Transverse colon (tissue), 4 donors: ENCODE measurements at regions of chr10 and their contacts with region 1.

Region 1: GRCh38 chr10:101214446-101215396 is 14.5 kb downstream of the LBX1 start:
- DNase-seq: peak; percentile 61
- H3K4me3 ChIP-seq: peak overlapping the region in 1 of 4 donors; percentile 4
- H3K27ac ChIP-seq: no peak overlapping the region
- H3K4me1 ChIP-seq: peaks cover 8 to 48% (median 33%) of the 10 kb centered on the region in 4 donors
- H3K27me3 ChIP-seq: peaks cover 97% of the 10 kb centered on the region
- CTCF ChIP-seq: peak; percentile 70 to 92 (median 85)
- EP300 ChIP-seq: no peak
- POLR2A ChIP-seq: no peak

Region 2: DNA sequence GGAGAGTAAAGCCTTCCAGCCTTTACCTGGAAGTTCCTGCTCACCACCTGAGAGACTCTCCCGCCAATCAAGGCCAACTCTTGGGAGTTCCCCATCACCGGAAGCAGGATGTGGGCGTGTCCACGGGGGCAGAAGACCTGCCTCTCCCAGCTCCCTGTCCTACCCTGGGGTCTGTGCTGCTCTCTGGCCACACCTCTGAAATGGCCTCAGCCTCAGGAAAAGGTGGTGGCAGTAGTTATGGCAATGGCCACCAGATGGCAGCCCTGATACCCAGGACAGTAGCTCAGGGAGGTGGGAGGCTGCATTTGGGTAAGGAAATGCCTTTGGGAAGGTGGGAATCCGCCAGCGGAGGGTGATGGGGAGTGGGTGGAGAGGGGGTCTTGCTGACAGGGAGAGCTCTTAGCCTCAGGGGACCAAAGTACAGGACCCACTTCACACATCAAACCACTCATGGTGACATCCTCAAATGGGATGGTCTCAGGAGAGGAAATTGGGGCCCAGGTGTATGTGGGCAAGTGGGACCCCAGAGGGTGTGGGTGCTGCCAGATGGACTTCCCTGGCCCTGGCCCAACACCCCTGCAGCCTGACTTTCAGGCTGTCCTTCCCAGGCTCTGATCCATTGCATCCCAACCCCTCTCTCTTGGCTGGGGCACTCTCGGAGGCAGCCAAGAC is 119.0 kb before region 1 on chr10:
- in situ Hi-C with region 1: no loop called
- intact Hi-C with region 1: no loop called
- DNase-seq: peak; percentile 82
- H3K4me3 ChIP-seq: no peak overlapping the region
- H3K27ac ChIP-seq: no peak overlapping the region
- H3K4me1 ChIP-seq: no peaks in the 10 kb centered on the region
- H3K27me3 ChIP-seq: peaks cover 85% of the 10 kb centered on the region
- CTCF ChIP-seq: peak; percentile 67 to 93 (median 85)
- EP300 ChIP-seq: no peak
- POLR2A ChIP-seq: no peak

Region 3: GRCh38 chr10:101297901-101298486 is 83.3 kb after region 1 on chr10:
- in situ Hi-C with region 1: no loop called
- intact Hi-C with region 1: loop called (anchors 10 kb)
- DNase-seq: peak; percentile 66
- H3K4me3 ChIP-seq: no peak overlapping the region
- H3K27ac ChIP-seq: no peak overlapping the region
- H3K4me1 ChIP-seq: peaks cover 0 to under 1% (median 0%) of the 10 kb centered on the region in 4 donors
- H3K27me3 ChIP-seq: peaks cover 75% of the 10 kb centered on the region
- CTCF ChIP-seq: peak; percentile 67 to 87 (median 80)
- EP300 ChIP-seq: no peak
- POLR2A ChIP-seq: no peak

Region 4: DNA sequence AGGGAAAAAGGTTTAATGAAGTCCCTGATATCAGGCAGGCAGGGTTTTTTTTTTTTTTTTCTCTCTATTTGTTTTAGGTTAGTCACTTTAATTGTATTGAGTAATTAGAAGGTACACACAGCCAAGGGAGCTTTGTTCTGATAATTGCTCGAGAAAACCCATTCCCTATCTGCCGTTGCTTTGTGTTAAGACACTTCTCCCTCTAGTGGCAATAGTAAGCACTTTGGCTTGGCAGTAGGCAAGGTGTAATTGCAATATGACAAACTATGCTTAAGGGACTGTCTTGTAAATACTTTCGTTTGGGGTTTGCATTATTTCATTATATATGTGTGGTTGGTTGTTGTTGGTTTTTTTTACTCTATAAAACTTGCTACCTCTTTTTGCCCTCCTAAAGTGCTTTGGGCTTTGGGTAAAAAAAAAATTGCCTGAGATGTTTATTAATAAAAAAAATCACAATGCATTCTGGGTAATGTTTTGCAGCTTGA is 252.6 kb after region 1 on chr10:
- in situ Hi-C with region 1: loop called in 1 of 4 experiments (anchors 25 kb)
- intact Hi-C with region 1: no loop called
- DNase-seq: no peak
- H3K4me3 ChIP-seq: no peak overlapping the region
- H3K27ac ChIP-seq: no peak overlapping the region
- H3K4me1 ChIP-seq: peaks cover 0 to 15% (median 9%) of the 10 kb centered on the region in 4 donors
- H3K27me3 ChIP-seq: no peaks in the 10 kb centered on the region
- CTCF ChIP-seq: peak; percentile 67 to 76 (median 73)
- EP300 ChIP-seq: no peak
- POLR2A ChIP-seq: no peak

Region 5: DNA sequence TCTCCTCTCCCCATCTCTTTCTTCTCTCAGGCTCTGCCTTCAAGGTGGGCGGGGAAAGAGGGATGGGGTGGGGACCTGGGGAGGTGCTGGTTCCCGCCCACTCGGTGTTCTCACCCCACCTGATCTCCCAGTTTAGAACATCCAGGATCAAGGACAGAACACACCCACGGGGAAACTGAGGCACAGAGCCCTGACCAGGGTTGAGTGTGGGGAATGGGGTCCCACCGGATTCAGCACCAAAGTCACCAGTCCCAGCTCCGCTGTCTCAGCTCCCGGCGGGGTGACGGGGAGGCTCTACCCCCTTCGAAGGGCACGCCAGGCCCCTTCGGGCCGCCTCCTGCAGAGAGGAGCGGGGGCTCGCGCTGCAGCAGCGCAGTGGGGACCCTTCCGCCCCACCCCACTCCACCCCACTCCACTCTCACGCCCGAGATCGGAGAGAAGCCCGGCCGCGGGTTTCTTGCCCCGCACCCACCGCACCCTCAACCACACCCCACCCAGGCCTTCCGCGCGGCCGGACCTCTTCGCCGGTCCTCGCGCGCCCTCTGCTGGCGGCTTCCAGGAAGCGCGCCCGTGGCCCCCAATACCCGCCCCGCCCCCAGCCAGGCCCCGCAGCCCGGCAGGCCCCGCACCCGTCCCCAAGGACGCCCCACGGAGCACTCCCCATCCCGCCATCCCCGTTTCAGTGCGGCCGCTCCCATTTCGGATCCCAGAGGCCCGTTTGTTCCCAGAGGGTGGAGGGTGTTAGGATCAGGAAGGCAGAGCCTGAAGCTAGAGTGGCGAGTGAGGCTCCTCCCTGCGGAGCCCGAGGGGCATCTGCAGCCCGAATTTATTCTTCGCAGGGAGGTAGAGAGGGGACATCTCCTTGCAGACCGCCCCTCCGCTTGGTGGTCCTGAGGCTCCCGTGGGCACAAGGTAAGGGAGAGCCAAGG is 355.4 kb after region 1 on chr10:
- in situ Hi-C with region 1: loop called (anchors 10 to 25 kb)
- intact Hi-C with region 1: loop called (anchors 2 kb)
- DNase-seq: peak; percentile 87
- H3K4me3 ChIP-seq: peak overlapping the region; percentile 6 to 59 (median 38)
- H3K27ac ChIP-seq: no peak overlapping the region
- H3K4me1 ChIP-seq: peaks cover 16 to 23% (median 19%) of the 10 kb centered on the region in 4 donors
- H3K27me3 ChIP-seq: peaks cover 50% of the 10 kb centered on the region
- CTCF ChIP-seq: peak; percentile 57 to 99 (median 96)
- EP300 ChIP-seq: no peak
- POLR2A ChIP-seq: no peak

Region 6: GRCh38 chr10:101749047-101750016 is 534.6 kb after region 1 on chr10:
- in situ Hi-C with region 1: loop called in 1 of 4 experiments (anchors 25 kb)
- intact Hi-C with region 1: no loop called
- DNase-seq: no peak
- H3K4me3 ChIP-seq: no peak overlapping the region
- H3K27ac ChIP-seq: no peak overlapping the region
- H3K4me1 ChIP-seq: no peaks in the 10 kb centered on the region
- H3K27me3 ChIP-seq: peaks cover 20% of the 10 kb centered on the region
- CTCF ChIP-seq: no peak
- EP300 ChIP-seq: no peak
- POLR2A ChIP-seq: no peak